ENCODE measurements at regions of chr2 and their contacts with region 1.

Region 1: GRCh38 chr2:47906157-47907038 is at the start of gene FBXO11:
- DNase-seq: peak; percentile 97
- H3K4me3 Mint-ChIP-seq: peak within 1 kb of the TSS; percentile 88
- H3K27ac Mint-ChIP-seq: peak within 1 kb of the TSS; percentile 91
- H3K4me1 Mint-ChIP-seq: peaks cover 40% of the 10 kb centered on the region
- H3K27me3 Mint-ChIP-seq: no peaks in the 10 kb centered on the region
- total RNA-seq, gene FBXO11: 38.2 to 41.1 TPM

Region 2: GRCh38 chr2:46942139-46942517 is 964.3 kb before region 1 on chr2:
- CTCF ChIA-PET with region 1: no interaction called
- POLR2A ChIA-PET with region 1: no interaction called
- intact Hi-C with region 1: loop called (anchors 2 kb)
- DNase-seq: peak; percentile 85
- H3K4me3 Mint-ChIP-seq: peak overlapping the region; percentile 99
- H3K27ac Mint-ChIP-seq: peak overlapping the region; percentile 100
- H3K4me1 Mint-ChIP-seq: peaks cover 46% of the 10 kb centered on the region
- H3K27me3 Mint-ChIP-seq: no peaks in the 10 kb centered on the region

Region 3: DNA sequence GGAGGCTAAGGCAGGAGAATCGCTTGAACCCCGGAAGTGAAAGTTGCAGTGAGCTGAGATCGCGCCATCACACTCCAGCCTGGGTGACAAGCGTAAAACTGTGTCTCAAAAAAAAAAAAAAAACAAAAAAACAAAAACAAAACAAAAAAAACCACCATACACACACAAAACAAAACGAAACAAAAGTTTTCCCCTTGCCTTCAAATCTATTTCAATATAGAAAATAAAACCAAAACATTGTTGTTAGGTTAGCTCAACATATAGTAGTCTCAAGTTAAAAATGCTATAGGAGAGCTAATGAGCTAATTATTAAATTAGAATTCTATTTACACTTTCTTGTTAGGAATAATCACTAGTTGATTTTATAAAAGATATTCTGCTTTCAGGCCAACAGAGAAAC is 43.4 kb before region 1 on chr2:
- CTCF ChIA-PET with region 1: interaction called, 10 read pairs
- POLR2A ChIA-PET with region 1: interaction called, 3 read pairs
- intact Hi-C with region 1: loop called (anchors 2 kb)
- DNase-seq: no peak
- H3K4me3 Mint-ChIP-seq: no peak overlapping the region
- H3K27ac Mint-ChIP-seq: no peak overlapping the region
- H3K4me1 Mint-ChIP-seq: peaks cover 60% of the 10 kb centered on the region
- H3K27me3 Mint-ChIP-seq: no peaks in the 10 kb centered on the region

Region 4: GRCh38 chr2:47888581-47889280 is 17.7 kb before region 1 on chr2:
- CTCF ChIA-PET with region 1: no interaction called
- POLR2A ChIA-PET with region 1: no interaction called
- intact Hi-C with region 1: no loop called
- DNase-seq: no peak
- H3K4me3 Mint-ChIP-seq: no peak overlapping the region
- H3K27ac Mint-ChIP-seq: peak overlapping the region; percentile 18
- H3K4me1 Mint-ChIP-seq: peaks cover 47% of the 10 kb centered on the region
- H3K27me3 Mint-ChIP-seq: no peaks in the 10 kb centered on the region

Region 5: DNA sequence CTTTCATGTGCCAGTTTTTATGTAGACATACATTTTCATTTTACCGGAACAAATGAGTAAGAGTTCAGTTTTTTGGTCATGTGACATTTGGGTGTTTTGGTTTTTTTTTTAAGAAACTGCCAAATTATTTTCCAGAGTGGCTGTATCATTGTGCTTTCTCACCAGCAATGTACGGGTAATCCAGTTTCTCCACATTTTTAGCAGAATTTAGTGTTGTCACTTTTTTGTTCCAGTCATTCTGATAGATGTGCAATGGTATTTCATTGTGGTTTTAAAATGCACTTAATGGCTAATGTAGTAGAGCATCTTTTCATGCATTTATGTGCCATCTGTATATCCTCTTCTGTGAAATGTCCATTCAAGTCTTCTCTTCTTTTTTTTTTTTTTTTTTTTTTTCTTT is 126.4 kb after region 1 on chr2:
- CTCF ChIA-PET with region 1: no interaction called
- POLR2A ChIA-PET with region 1: no interaction called
- intact Hi-C with region 1: loop called (anchors 2 kb)
- DNase-seq: no peak
- H3K4me3 Mint-ChIP-seq: no peak overlapping the region
- H3K27ac Mint-ChIP-seq: no peak overlapping the region
- H3K4me1 Mint-ChIP-seq: peaks cover 4% of the 10 kb centered on the region
- H3K27me3 Mint-ChIP-seq: no peaks in the 10 kb centered on the region

Region 6: DNA sequence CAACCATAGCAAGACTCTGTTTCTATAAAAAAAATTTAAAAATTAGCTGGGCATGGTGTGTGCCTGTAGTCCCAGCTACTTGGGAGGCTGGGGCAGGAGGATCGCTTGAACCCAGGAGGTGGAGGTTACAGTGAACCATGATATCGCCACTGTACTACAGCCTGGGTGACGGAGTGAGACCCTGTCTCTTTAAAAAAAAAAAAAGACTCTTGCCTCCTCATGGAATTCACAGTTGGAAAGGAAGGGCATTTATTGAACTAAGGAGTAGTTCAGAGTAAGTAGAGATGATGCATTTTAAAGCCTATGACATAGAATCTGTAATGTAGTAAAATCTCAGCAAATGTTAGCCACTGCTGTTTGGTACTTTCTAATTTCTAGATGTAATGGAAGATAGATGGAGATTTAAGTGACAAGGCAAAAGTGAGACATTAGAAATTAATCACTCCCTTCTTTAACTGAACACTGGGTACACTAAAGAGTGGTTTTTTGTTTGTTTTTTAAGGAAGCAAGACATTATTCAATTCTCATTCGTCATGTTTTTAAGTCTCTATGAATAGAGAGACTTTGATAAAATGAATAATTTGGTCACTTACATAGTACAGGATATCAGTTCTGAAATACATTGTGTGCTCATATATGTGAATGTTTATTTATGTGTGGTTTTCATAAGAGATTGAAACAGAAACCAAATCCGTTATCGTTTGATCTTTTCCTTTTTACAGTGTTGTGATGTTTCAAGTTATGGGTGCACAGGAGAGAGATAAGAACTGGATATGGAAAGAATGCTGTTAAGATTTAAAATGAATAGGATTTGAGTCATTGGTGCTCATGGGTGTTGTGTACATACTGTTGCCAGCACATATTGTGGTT is 437.4 kb after region 1 on chr2:
- CTCF ChIA-PET with region 1: no interaction called
- POLR2A ChIA-PET with region 1: no interaction called
- intact Hi-C with region 1: loop called (anchors 1 kb)
- DNase-seq: no peak
- H3K4me3 Mint-ChIP-seq: peak overlapping the region; percentile 17
- H3K27ac Mint-ChIP-seq: peak overlapping the region; percentile 46
- H3K4me1 Mint-ChIP-seq: peaks cover 42% of the 10 kb centered on the region
- H3K27me3 Mint-ChIP-seq: no peaks in the 10 kb centered on the region

Region 7: DNA sequence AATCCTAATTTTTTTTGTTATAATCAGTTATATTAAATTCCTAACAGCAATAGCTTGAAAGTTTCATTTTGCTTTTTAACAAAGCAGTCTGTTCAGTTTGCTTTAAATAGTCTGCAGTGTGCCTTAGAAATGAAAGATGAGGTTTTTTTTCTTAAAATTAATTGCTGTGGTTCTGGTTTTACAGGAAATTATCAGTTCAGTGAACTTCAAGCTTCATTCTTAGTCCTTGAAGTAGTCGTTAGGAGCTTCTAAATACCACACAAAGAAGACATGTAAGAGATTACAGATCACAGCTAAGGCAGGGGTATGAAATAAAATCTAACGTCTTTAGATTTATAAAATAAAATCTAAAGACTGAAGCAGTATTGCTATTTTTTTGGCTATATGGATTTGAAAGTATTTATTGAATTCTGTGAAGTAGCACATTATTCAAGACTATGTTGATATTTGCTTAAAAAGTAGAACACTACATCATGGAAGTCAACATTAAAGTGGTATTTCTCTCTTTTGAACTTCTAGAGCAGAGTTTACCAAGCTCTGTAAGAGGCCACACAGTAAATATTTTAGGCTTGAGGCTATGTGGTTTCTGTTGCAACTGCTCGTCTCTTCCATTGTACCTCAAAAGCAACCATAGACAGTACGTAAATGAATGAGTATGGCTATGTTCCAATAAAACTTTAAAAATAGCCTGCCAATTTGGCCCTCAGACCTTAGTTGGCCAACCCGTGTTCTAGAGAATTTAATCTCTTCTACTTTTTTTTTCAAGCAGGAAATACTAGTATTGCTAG is 542.1 kb after region 1 on chr2:
- CTCF ChIA-PET with region 1: no interaction called
- POLR2A ChIA-PET with region 1: no interaction called
- intact Hi-C with region 1: loop called (anchors 2 kb)
- DNase-seq: no peak
- H3K4me3 Mint-ChIP-seq: peak overlapping the region; percentile 39
- H3K27ac Mint-ChIP-seq: peak overlapping the region; percentile 83
- H3K4me1 Mint-ChIP-seq: peaks cover 43% of the 10 kb centered on the region
- H3K27me3 Mint-ChIP-seq: no peaks in the 10 kb centered on the region

Measured in activated CD4-positive, alpha-beta memory T cell treated with anti-CD3 and anti-CD28 coated beads for 36 hours (primary cell).